ENCODE measurements at regions of chr14 and their contacts with region 1.

Region 1: GRCh38 chr14:61609191-61609843 is 86.0 kb upstream of the HIF1A start:
- DNase-seq: no peak
- ATAC-seq: no peak
- H3K4me3 ChIP-seq: no peak overlapping the region
- H3K4me3 Mint-ChIP-seq: no peak overlapping the region
- H3K27ac ChIP-seq: no peak overlapping the region
- H3K27ac Mint-ChIP-seq: peak overlapping the region in 1 of 9 donors; percentile 25
- H3K4me1 ChIP-seq: no peaks in the 10 kb centered on the region
- H3K4me1 Mint-ChIP-seq: peaks cover 0 to 6% (median 0%) of the 10 kb centered on the region in 7 donors
- H3K27me3 ChIP-seq: no peaks in the 10 kb centered on the region
- H3K27me3 Mint-ChIP-seq: no peaks in the 10 kb centered on the region

Region 2: GRCh38 chr14:61479746-61480502 is 129.4 kb before region 1 on chr14:
- CTCF ChIA-PET with region 1: no interaction called
- POLR2A ChIA-PET with region 1: no interaction called
- intact Hi-C with region 1: no loop called
- DNase-seq: no peak
- ATAC-seq: no peak
- H3K4me3 ChIP-seq: no peak overlapping the region
- H3K4me3 Mint-ChIP-seq: peak overlapping the region; percentile 22 to 82 (median 74)
- H3K27ac ChIP-seq: peak overlapping the region; percentile 85
- H3K27ac Mint-ChIP-seq: peak overlapping the region in 8 of 9 donors; percentile 84 to 100 (median 95)
- H3K4me1 ChIP-seq: peaks cover 52 to 68% of the 10 kb centered on the region in 2 donors
- H3K4me1 Mint-ChIP-seq: peaks cover 29 to 95% (median 87%) of the 10 kb centered on the region in 7 donors
- H3K27me3 ChIP-seq: no peaks in the 10 kb centered on the region
- H3K27me3 Mint-ChIP-seq: no peaks in the 10 kb centered on the region

Region 3: GRCh38 chr14:61525293-61526011 is 83.9 kb before region 1 on chr14:
- CTCF ChIA-PET with region 1: no interaction called
- POLR2A ChIA-PET with region 1: no interaction called
- intact Hi-C with region 1: no loop called
- DNase-seq: peak in 1 of 9 donors; percentile 69
- ATAC-seq: peak; percentile 74
- H3K4me3 ChIP-seq: no peak overlapping the region
- H3K4me3 Mint-ChIP-seq: peak overlapping the region in 3 of 10 donors; percentile 2 to 73 (median 63)
- H3K27ac ChIP-seq: peak overlapping the region; percentile 34
- H3K27ac Mint-ChIP-seq: peak overlapping the region; percentile 69 to 90 (median 81)
- H3K4me1 ChIP-seq: peaks cover 22 to 68% of the 10 kb centered on the region in 2 donors
- H3K4me1 Mint-ChIP-seq: peaks cover 43 to 86% (median 73%) of the 10 kb centered on the region in 7 donors
- H3K27me3 ChIP-seq: no peaks in the 10 kb centered on the region
- H3K27me3 Mint-ChIP-seq: no peaks in the 10 kb centered on the region

Region 4: GRCh38 chr14:61644834-61645233 is 35.5 kb after region 1 on chr14:
- CTCF ChIA-PET with region 1: no interaction called
- POLR2A ChIA-PET with region 1: interaction called, 3 read pairs
- intact Hi-C with region 1: loop called in 1 of 2 experiments (anchors 5 kb)
- DNase-seq: peak in 1 of 9 donors; percentile 18
- ATAC-seq: no peak
- H3K4me3 ChIP-seq: no peak overlapping the region
- H3K4me3 Mint-ChIP-seq: no peak overlapping the region
- H3K27ac ChIP-seq: no peak overlapping the region
- H3K27ac Mint-ChIP-seq: peak overlapping the region in 2 of 9 donors; percentile 17 to 38
- H3K4me1 ChIP-seq: peaks cover 8 to 16% of the 10 kb centered on the region in 2 donors
- H3K4me1 Mint-ChIP-seq: peaks cover 18 to 57% (median 33%) of the 10 kb centered on the region in 7 donors
- H3K27me3 ChIP-seq: no peaks in the 10 kb centered on the region
- H3K27me3 Mint-ChIP-seq: peaks cover 0 to 2% (median 0%) of the 10 kb centered on the region in 5 donors

Region 5: DNA sequence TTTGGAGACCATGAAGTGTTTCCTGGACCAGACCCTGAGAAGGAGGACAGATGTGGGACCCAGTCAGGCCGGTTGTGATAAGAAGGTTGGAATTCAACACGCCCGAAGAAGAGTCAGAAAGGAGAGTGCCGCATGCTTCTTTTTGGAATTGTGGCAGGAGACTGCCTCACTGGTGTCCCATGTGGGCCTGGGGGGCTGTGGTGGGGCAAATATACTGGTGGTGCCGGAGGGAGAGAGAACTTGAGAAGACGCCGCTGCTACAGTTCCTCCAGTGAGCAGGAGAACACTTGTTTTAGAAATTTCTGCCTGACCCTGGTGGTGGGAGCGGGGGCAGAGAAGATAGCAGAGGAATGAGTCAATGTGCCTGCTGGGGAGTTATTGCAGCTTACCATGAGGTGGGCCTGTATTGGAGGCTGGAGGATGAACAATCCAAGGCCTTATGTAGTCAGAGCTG is 364.6 kb after region 1 on chr14:
- CTCF ChIA-PET with region 1: no interaction called
- POLR2A ChIA-PET with region 1: no interaction called
- intact Hi-C with region 1: no loop called
- DNase-seq: no peak
- ATAC-seq: no peak
- H3K4me3 ChIP-seq: no peak overlapping the region
- H3K4me3 Mint-ChIP-seq: no peak overlapping the region
- H3K27ac ChIP-seq: no peak overlapping the region
- H3K27ac Mint-ChIP-seq: no peak overlapping the region
- H3K4me1 ChIP-seq: no peaks in the 10 kb centered on the region
- H3K4me1 Mint-ChIP-seq: no peaks in the 10 kb centered on the region
- H3K27me3 ChIP-seq: no peaks in the 10 kb centered on the region
- H3K27me3 Mint-ChIP-seq: peaks cover 4 to 50% (median 39%) of the 10 kb centered on the region in 5 donors

Measured in naive thymus-derived CD4-positive, alpha-beta T cell (primary cell).